WTC11 (cell line): ENCODE measurements at regions of chr12 and their contacts with region 1.

Region 1: GRCh38 chr12:62983599-62984022 is 48.7 kb upstream of the PPM1H start:
- DNase-seq: peak; percentile 32
- ATAC-seq: peak; percentile 92
- H3K4me3 Mint-ChIP-seq: no peak overlapping the region
- H3K27ac Mint-ChIP-seq: no peak overlapping the region
- H3K4me1 Mint-ChIP-seq: no peaks in the 10 kb centered on the region
- H3K27me3 Mint-ChIP-seq: no peaks in the 10 kb centered on the region
- CTCF ChIP-seq: no peak

Region 2: GRCh38 chr12:62995097-62995496 is 11.5 kb after region 1 on chr12:
- CTCF ChIA-PET with region 1: interaction called, 14 read pairs
- POLR2A ChIA-PET with region 1: no interaction called
- DNase-seq: peak; percentile 50
- ATAC-seq: peak; percentile 94
- H3K4me3 Mint-ChIP-seq: no peak overlapping the region
- H3K27ac Mint-ChIP-seq: no peak overlapping the region
- H3K4me1 Mint-ChIP-seq: peaks cover 28% of the 10 kb centered on the region
- H3K27me3 Mint-ChIP-seq: no peaks in the 10 kb centered on the region; the same call in 1 of the 2 replicates
- CTCF ChIP-seq: no peak